ENCODE measurements at regions of chr12 and their contacts with region 1.

Region 1: DNA sequence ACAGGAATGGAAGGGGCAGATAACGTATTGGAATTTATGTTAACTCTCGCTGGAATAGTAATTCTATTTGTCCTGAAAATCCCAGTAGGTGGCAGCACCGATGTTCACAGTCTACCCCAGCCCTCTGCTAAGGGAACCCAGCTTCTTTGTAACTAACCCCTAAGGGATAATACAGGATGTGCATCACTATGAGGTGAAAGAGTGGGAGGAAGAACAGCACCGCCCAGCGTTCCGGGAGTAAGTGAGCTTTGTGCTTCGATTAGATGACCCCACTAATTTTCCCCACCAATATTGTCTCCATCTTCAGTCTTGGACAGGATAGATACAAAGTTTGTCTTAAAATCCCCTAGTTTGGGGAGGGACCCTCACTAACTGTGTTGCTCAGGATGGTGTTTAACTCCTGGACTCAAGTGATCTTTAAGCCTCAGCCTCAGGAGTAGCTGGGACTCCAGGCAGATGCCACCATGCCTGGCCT is 2.7 kb downstream of the SLC2A3 start:
- DNase-seq: peak; percentile 69 to 83 (median 72)
- ATAC-seq: peak; percentile 89
- H3K4me3 ChIP-seq: peak overlapping the region; percentile 90
- H3K27ac ChIP-seq: no peak overlapping the region; the same call in 2 of the 3 replicates
- H3K4me1 ChIP-seq: peaks cover 5 to 10% of the 10 kb centered on the region in 2 experiments; a peak in 4 of 5 replicates
- H3K27me3 ChIP-seq: no peaks in the 10 kb centered on the region
- CTCF ChIP-seq: peak; percentile 60 to 78 (median 77)
- EP300 ChIP-seq: no peak
- POLR2A ChIP-seq: no peak
- RAD21 ChIP-seq: peak; percentile 48 to 78

Region 2: GRCh38 chr12:7869127-7869526 is 64.2 kb before region 1 on chr12:
- CTCF ChIA-PET with region 1: interaction called, 3 read pairs
- POLR2A ChIA-PET with region 1: no interaction called
- in situ Hi-C with region 1: no loop called
- intact Hi-C with region 1: loop called (anchors 10 kb)
- DNase-seq: no peak
- ATAC-seq: no peak
- H3K4me3 ChIP-seq: no peak overlapping the region
- H3K27ac ChIP-seq: no peak overlapping the region
- H3K4me1 ChIP-seq: peaks cover 4 to 6% of the 10 kb centered on the region in 2 experiments; a peak in 4 of 5 replicates
- H3K27me3 ChIP-seq: no peaks in the 10 kb centered on the region; a peak in 1 of 5 replicates
- CTCF ChIP-seq: no peak
- EP300 ChIP-seq: no peak
- POLR2A ChIP-seq: no peak
- RAD21 ChIP-seq: no peak

Region 3: DNA sequence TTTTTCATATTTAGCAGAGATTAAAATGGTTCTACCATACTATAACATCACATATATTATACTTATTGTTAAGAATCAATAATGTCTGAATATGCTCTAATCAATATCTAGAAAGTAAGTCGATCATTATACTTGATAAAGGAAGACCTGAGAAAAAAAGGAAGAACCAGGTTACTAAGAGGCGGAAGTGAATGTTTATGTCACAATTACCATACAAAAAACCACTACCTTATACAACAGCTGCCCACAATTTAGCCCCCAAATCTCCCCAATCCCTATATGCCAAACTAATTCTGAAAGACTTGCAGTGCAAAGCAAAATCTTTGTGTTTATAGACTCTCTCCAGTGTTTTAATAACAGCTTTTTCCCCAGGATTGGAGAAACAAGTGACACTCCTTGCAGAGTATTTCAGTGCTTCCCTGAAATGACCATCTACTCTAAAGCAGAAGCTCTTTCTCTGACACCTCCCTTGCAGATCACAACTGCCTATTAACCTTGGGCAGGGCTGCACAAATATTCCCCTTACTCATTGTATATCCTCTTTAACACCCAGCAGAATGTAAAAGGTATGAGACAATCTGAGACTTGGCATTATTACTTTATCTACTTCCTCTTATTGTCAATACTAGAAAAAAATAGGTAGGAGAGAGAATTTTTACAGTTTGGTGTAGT is 15.4 kb after region 1 on chr12:
- CTCF ChIA-PET with region 1: no interaction called
- POLR2A ChIA-PET with region 1: interaction called, 13 read pairs
- in situ Hi-C with region 1: no loop called
- intact Hi-C with region 1: no loop called
- DNase-seq: peak in 1 of 4 experiments; percentile 20
- ATAC-seq: peak; percentile 81
- H3K4me3 ChIP-seq: no peak overlapping the region
- H3K27ac ChIP-seq: peak overlapping the region; percentile 68; the same call in 2 of the 3 replicates
- H3K4me1 ChIP-seq: peaks cover 6 to 13% of the 10 kb centered on the region in 2 experiments; a peak in 3 of 5 replicates
- H3K27me3 ChIP-seq: no peaks in the 10 kb centered on the region
- CTCF ChIP-seq: no peak
- EP300 ChIP-seq: no peak
- POLR2A ChIP-seq: no peak
- RAD21 ChIP-seq: no peak

Region 4: GRCh38 chr12:7959701-7960121 is 26.4 kb after region 1 on chr12:
- CTCF ChIA-PET with region 1: interaction called, 3 read pairs
- POLR2A ChIA-PET with region 1: interaction called, 51 read pairs
- in situ Hi-C with region 1: no loop called
- intact Hi-C with region 1: loop called (anchors 1 kb)
- DNase-seq: peak; percentile 17 to 68 (median 22)
- ATAC-seq: peak; percentile 56
- H3K4me3 ChIP-seq: peak overlapping the region; percentile 33
- H3K27ac ChIP-seq: peak overlapping the region; percentile 88
- H3K4me1 ChIP-seq: peaks cover 10 to 35% of the 10 kb centered on the region in 2 experiments; a peak in 4 of 5 replicates
- H3K27me3 ChIP-seq: no peaks in the 10 kb centered on the region
- CTCF ChIP-seq: no peak
- EP300 ChIP-seq: no peak
- POLR2A ChIP-seq: no peak
- RAD21 ChIP-seq: peak in 1 of 2 experiments; percentile 9; a peak in 1 of 4 replicates

Region 5: GRCh38 chr12:7989827-7990551 is 56.7 kb after region 1 on chr12:
- CTCF ChIA-PET with region 1: interaction called, 12 read pairs
- POLR2A ChIA-PET with region 1: interaction called, 26 read pairs
- in situ Hi-C with region 1: loop called (anchors 5 kb)
- intact Hi-C with region 1: loop called (anchors 1 kb)
- DNase-seq: peak; percentile 7 to 58 (median 19)
- ATAC-seq: peak; percentile 79
- H3K4me3 ChIP-seq: no peak overlapping the region
- H3K27ac ChIP-seq: peak overlapping the region; percentile 45; the same call in 2 of the 3 replicates
- H3K4me1 ChIP-seq: peaks cover 9 to 21% of the 10 kb centered on the region in 2 experiments; a peak in 4 of 5 replicates
- H3K27me3 ChIP-seq: no peaks in the 10 kb centered on the region
- CTCF ChIP-seq: no peak
- EP300 ChIP-seq: peak; percentile 66
- POLR2A ChIP-seq: no peak
- RAD21 ChIP-seq: no peak

Region 6: DNA sequence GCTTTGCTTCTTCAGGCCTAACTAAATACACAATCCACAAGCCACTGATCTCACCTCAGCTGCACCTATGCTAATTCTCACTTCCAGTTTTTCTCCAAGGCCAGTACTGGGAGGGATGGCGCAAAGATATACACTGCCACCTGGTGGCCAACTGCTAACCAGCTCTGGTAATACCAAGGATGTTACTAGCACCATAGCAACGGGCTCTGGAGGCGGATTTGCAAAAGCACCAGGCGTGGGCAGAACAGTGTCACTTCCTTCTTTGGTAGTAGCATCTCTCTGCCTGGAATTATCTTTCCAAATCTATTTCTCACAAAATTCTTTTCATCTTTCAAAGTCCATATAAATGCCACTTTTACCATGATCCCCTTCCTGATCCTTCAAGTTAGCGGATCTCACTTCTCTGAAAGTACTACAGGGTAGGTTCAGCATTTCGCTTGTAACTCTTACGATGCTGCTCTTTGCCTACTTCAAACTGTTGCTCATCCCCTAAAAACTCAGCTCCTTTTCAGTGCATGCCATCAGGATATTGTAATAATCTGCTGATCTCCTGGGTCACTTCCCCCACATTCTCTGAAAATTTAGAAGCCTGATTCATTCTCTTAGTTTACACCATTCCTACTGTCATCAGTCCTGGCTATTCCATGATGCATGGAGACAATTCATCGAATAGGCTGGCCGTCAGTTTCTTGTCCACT is 62.1 kb after region 1 on chr12:
- CTCF ChIA-PET with region 1: interaction called, 12 read pairs
- POLR2A ChIA-PET with region 1: interaction called, 26 read pairs
- in situ Hi-C with region 1: loop called (anchors 5 kb)
- intact Hi-C with region 1: loop called (anchors 1 kb)
- DNase-seq: peak; percentile 37 to 78 (median 41)
- ATAC-seq: peak; percentile 99
- H3K4me3 ChIP-seq: no peak overlapping the region
- H3K27ac ChIP-seq: no peak overlapping the region
- H3K4me1 ChIP-seq: peaks cover 2 to 12% of the 10 kb centered on the region in 2 experiments; a peak in 3 of 5 replicates
- H3K27me3 ChIP-seq: no peaks in the 10 kb centered on the region
- CTCF ChIP-seq: peak; percentile 75 to 80 (median 78)
- EP300 ChIP-seq: no peak
- POLR2A ChIP-seq: no peak
- RAD21 ChIP-seq: peak; percentile 95 to 97

Region 7: DNA sequence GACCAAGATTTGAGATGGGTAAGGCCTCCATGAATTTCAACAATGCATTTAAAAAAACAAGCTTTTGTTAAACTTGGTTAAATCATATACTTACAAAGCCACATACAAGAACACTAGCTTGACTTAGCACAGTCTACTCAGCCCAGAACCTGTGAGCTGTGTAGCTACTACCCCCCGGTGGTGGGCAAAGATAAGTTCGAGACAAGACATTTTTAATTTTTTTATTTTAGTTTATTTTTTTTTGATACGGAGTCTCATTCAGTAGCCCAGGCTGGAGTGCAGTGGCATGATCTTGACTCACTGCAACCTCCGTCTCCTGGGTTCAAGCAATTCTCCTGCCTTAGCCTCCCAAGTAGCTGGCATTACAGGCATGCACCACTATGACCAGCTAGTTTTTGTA is 145.1 kb after region 1 on chr12:
- CTCF ChIA-PET with region 1: no interaction called
- POLR2A ChIA-PET with region 1: no interaction called
- in situ Hi-C with region 1: no loop called
- intact Hi-C with region 1: loop called (anchors 10 kb)
- DNase-seq: peak in 3 of 4 experiments; percentile 23 to 61 (median 45)
- ATAC-seq: peak; percentile 31; the same call in 2 of the 3 replicates
- H3K4me3 ChIP-seq: no peak overlapping the region
- H3K27ac ChIP-seq: no peak overlapping the region
- H3K4me1 ChIP-seq: peaks cover 9 to 17% of the 10 kb centered on the region in 2 experiments; a peak in 3 of 5 replicates
- H3K27me3 ChIP-seq: no peaks in the 10 kb centered on the region
- CTCF ChIP-seq: peak; percentile 42 to 71 (median 44); a peak in 5 of 6 replicates
- EP300 ChIP-seq: no peak
- POLR2A ChIP-seq: no peak
- RAD21 ChIP-seq: peak; percentile 67 to 69